ENCODE measurements at regions of chr12 and their contacts with region 1.

Region 1: DNA sequence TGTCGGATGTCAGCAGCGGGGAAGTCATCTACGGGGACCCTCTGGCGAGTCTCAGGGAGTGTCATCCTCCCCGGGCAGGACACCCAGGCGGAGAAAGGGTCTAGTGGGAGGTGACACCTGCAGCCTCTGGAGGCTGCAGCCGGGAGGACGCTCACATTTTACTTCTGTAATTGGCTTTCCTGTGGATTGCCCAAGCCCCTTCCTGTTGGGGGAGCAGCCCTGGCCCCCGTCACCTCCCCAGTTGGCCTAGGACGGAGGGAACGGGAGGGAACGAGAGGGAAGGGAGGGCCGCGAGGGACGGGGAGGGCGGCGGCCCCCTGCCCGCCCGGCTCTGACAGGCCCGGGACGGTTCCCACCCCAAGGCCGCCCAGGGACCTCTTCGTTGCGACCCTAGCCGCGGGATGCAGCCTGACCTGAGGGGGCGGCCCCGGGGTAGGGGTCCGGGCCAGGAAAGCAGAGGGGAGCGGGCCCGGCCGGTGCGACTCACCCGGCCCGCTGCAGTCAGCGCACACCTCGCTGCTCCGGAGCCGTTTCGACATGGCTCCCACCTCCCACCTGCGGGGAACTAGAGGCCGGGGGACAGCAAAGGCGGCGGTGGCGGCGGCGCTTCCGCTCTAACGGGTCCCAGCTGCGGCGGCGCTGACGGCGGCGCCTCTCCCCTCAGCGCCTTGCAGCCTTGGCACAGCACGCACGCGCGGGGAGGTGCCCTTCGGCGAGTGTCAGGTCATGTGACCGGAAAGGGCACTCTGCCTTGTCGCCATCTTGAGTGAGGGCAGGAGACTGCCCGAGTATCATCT is at the start of gene GIT2:
- DNase-seq: peak; percentile 97
- ATAC-seq: peak; percentile 91
- total RNA-seq, gene GIT2: 41.5 TPM

Region 2: DNA sequence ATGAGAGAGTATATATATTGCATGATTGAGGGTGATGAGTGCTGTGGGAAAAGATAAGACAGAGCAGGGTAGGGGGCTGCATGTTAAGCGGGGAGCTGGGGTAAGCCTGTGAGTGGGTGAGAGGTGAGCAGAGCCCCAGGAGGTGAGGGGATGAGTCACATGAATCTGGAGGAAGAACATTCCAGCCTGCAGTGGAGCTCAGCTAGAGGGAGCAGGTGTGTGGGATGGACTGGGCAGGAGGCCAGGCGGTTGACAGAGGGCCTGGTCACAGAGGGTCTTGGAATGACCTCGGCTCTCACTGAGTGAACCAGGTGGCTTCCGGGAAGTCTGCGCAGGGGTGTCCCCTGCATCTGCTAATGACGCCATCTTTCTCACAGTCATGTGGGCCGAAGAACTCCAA is 44.1 kb before region 1 on chr12:
- intact Hi-C with region 1: loop called (anchors 5 kb)
- DNase-seq: peak; percentile 66
- ATAC-seq: peak; percentile 56

Region 3: DNA sequence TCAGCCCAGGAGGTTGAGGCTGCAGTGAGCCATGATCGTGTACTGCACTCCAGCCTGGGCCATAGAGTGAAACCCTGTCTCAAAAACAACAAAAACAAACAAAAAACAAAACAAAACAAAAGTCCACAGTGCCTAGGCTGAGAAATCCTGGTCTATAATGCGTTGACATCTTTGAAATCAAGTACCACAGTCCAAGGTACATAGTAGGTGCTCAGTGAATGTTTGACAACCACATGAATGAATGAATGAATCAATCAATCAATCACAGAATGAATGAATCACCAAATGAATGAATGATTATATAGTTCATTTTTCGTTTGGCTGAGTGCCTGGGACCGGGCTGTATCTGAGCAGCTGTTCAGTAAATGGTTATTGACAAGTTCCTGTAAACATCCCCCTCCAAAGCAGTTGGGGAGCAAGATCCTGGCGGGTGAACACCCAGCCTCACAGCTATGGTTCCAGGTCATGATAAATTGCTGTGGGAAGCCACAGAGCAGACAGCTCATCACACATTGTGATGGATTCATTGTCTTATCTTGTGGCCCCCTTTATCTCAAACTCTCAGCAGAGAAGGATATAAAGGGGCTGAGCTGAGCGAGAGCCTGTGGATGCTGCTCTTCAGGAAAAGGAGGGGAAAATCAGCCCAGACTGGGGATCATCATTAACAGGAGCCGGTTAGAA is 97.9 kb after region 1 on chr12:
- intact Hi-C with region 1: no loop called
- DNase-seq: no peak
- ATAC-seq: no peak

Region 4: GRCh38 chr12:110203546-110203945 is 207.7 kb after region 1 on chr12:
- intact Hi-C with region 1: no loop called
- DNase-seq: no peak
- ATAC-seq: no peak

Measured in Right ventricle myocardium superior (tissue), 1 donor.